Activated B cell treated with CpG ODN at 0.5 μM for 24 hours (primary cell): ENCODE measurements at regions of chr20 and their contacts with region 1.

Region 1: GRCh38 chr20:19725814-19726525 is 32.1 kb upstream of the RIN2 start:
- DNase-seq: no peak
- ATAC-seq: no peak
- H3K4me3 Mint-ChIP-seq: no peak overlapping the region
- H3K27ac Mint-ChIP-seq: no peak overlapping the region
- H3K4me1 Mint-ChIP-seq: peaks cover 37% of the 10 kb centered on the region
- H3K27me3 Mint-ChIP-seq: no peaks in the 10 kb centered on the region
- CTCF ChIP-seq: no peak

Region 2: GRCh38 chr20:19519466-19519865 is 206.5 kb before region 1 on chr20:
- CTCF ChIA-PET with region 1: no interaction called
- POLR2A ChIA-PET with region 1: no interaction called
- intact Hi-C with region 1: no loop called
- DNase-seq: no peak
- ATAC-seq: no peak
- H3K4me3 Mint-ChIP-seq: no peak overlapping the region
- H3K27ac Mint-ChIP-seq: no peak overlapping the region
- H3K4me1 Mint-ChIP-seq: no peaks in the 10 kb centered on the region
- H3K27me3 Mint-ChIP-seq: peaks cover 4% of the 10 kb centered on the region
- CTCF ChIP-seq: no peak

Region 3: DNA sequence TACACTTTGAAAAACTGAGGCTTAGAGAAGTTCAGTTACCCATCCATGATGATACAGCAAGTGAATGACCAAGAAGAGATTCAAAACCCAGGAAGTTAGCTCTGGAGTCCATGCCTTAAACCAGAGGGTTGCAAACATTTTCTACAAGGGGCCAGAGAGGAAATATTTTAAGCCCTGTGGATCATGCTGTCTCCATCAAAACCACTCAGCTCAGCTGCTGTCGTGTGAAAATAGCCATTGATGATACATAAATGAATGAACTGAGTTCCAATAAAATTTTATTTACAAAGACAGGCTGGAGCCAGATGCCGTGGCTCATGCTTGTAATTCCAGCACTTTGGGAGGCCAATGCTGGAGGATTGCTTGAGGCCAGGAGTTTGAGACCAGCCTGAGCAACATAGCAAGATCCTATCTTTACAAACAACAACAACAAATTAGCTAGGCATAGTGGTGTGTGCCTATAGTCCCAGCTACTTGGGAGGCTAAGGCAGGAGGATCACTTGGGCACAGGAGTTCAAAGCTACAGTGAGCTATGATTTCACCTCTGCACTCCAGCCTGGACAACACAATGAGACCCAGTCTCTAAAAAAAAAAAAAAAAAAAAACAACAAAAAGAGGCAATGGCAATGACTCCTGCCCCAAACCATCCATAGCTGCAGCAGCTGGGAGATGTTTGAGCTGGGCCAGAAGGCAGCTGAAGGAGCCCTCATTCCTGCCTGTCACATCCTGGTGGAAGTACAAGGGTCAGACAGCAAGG is 12.0 kb before region 1 on chr20:
- CTCF ChIA-PET with region 1: no interaction called
- POLR2A ChIA-PET with region 1: no interaction called
- intact Hi-C with region 1: no loop called
- DNase-seq: no peak
- ATAC-seq: no peak
- H3K4me3 Mint-ChIP-seq: no peak overlapping the region
- H3K27ac Mint-ChIP-seq: no peak overlapping the region
- H3K4me1 Mint-ChIP-seq: no peaks in the 10 kb centered on the region
- H3K27me3 Mint-ChIP-seq: no peaks in the 10 kb centered on the region
- CTCF ChIP-seq: no peak

Region 4: GRCh38 chr20:19742974-19743639 is 17.1 kb after region 1 on chr20:
- CTCF ChIA-PET with region 1: no interaction called
- POLR2A ChIA-PET with region 1: no interaction called
- intact Hi-C with region 1: loop called (anchors 2 kb)
- DNase-seq: no peak
- ATAC-seq: no peak
- H3K4me3 Mint-ChIP-seq: no peak overlapping the region
- H3K27ac Mint-ChIP-seq: no peak overlapping the region
- H3K4me1 Mint-ChIP-seq: no peaks in the 10 kb centered on the region
- H3K27me3 Mint-ChIP-seq: peaks cover 25% of the 10 kb centered on the region
- CTCF ChIP-seq: no peak

Region 5: DNA sequence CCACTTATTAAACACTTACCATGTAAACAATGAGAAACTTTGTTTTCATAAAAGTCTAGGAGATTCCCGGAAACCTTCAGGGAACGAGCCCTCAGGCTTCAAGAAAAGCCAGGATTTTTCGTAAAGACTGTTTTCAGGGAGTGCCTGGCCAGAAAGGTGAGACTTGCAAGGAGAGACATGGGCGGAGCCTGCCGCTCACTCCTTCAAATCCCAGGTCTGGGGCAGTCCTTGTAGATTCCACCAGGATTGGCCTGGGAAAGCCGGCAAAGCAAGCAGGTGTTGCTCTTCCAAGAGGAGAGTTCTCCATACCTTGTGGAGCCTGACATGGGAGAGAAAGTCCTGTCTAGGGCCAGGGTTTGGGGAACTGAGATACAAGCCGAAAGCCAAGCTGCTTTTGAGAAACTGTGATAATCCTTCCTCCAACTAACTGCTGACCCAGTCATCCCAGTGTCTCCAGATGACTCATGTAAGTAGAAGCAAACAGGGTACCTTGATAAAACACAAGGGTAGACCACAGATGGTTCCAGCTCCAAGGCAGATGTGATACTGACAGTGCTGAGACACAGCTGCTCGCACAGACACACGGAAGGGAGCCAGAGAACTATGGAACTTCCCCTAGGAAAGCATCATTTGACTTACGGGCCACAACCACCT is 221.8 kb after region 1 on chr20:
- CTCF ChIA-PET with region 1: no interaction called
- POLR2A ChIA-PET with region 1: no interaction called
- intact Hi-C with region 1: no loop called
- DNase-seq: no peak
- ATAC-seq: no peak
- H3K4me3 Mint-ChIP-seq: no peak overlapping the region
- H3K27ac Mint-ChIP-seq: no peak overlapping the region
- H3K4me1 Mint-ChIP-seq: peaks cover 18% of the 10 kb centered on the region
- H3K27me3 Mint-ChIP-seq: peaks cover 2% of the 10 kb centered on the region
- CTCF ChIP-seq: no peak